Activated naive CD8-positive, alpha-beta T cell treated with anti-CD3 and anti-CD28 coated beads, Interleukin-2, amount 10 ng/mL, durations not matched to agents 7 days and 5 days (primary cell): ENCODE measurements at regions of chr17 and their contacts with region 1.

Region 1: GRCh38 chr17:716238-716637 is 1.6 kb upstream of the VPS53 start:
- DNase-seq: no peak
- ATAC-seq: no peak
- H3K4me3 Mint-ChIP-seq: no peak overlapping the region
- H3K27ac Mint-ChIP-seq: no peak overlapping the region
- H3K4me1 Mint-ChIP-seq: peaks cover 11% of the 10 kb centered on the region
- H3K27me3 Mint-ChIP-seq: peaks cover 3% of the 10 kb centered on the region

Region 2: DNA sequence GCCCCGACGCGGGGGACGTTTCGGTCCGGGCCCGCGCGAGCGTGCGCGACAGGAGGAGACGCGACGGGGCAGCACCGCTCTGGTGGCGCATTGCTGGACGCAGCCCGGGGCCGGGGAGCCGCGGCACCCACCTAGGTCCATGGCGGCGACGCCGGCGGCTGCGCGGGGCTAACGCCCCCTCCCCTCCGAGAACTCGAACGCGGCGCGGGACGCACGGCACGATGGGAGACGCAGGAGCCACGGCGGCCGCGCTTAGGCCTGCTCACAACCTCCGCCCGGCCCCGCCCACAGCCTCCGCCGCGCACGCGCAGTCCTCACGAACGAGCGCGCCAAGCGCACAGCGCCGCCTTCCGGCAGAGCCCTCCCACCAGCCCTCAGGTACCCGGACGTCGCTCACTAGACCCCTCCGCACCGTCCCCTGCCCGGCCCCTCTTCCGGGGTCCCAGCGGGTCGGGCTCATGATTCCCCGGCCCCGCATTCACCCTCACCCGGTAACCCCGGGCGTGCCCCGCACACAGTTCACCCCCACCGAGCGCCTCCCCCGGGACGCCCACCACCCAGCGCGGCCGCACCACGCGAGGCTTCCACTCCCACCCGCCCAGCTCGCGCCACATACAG is 35.9 kb after region 1 on chr17 and contains the start of gene GEMIN4:
- POLR2A ChIA-PET with region 1: interaction called, 21 read pairs
- DNase-seq: peak; percentile 100
- ATAC-seq: peak; percentile 88
- H3K4me3 Mint-ChIP-seq: peak within 1 kb of the TSS; percentile 98
- H3K27ac Mint-ChIP-seq: peak within 1 kb of the TSS; percentile 97
- H3K4me1 Mint-ChIP-seq: peaks cover 25% of the 10 kb centered on the region
- H3K27me3 Mint-ChIP-seq: no peaks in the 10 kb centered on the region
- total RNA-seq, gene GEMIN4: 29.4 to 30.2 TPM